ENCODE measurements at regions of chr5 and their contacts with region 1.

Region 1: GRCh38 chr5:150700594-150701293 is at the start of gene RBM22:
- DNase-seq: peak; percentile 84 to 96 (median 92)
- ATAC-seq: peak; percentile 93 to 94
- H3K4me3 Mint-ChIP-seq: no peak within 1 kb of the TSS
- H3K27ac Mint-ChIP-seq: no peak within 1 kb of the TSS
- H3K4me1 Mint-ChIP-seq: peaks cover 0 to 7% (median under 1%) of the 10 kb centered on the region in 4 donors
- H3K27me3 Mint-ChIP-seq: no peaks in the 10 kb centered on the region
- polyA plus RNA-seq, gene RBM22: 51.4 to 57.0 (median 56.2) TPM

Region 2: DNA sequence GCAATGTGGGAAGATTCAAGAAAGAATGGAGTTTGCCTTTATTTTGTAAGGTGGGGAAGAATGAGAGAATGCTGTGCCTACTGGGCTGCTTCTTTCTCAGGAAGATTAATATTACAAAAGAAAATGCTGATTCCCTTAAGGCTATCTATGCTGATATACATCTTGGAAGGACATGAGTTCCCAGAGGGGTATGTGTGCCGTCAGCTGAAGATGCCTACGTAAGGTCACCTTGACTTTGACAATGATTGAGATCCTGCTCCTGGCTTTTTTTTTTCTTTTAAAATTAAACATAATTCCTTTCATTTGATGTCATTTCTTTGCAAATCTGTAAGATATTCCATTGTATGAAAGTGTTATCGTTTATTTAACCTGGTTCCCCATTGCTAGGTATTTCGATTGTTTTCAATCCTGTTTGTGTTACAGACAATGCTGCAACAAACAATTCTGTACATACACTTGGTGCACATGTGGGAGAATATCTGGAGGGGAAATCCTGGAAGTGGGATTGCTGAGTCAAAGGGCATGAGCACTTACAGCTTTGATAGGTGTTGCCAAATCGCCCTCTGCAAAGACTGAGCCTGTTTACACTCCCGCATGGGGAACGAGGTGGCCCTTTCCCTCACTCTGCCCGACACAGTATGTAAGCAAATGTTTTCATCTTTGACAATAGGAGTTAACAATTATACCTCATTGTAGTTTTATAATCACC is 822.6 kb before region 1 on chr5:
- POLR2A ChIA-PET with region 1: no interaction called
- DNase-seq: no peak
- ATAC-seq: no peak
- H3K4me3 Mint-ChIP-seq: no peak overlapping the region
- H3K27ac Mint-ChIP-seq: no peak overlapping the region
- H3K4me1 Mint-ChIP-seq: no peaks in the 10 kb centered on the region
- H3K27me3 Mint-ChIP-seq: peaks cover 0 to 12% (median 8%) of the 10 kb centered on the region in 5 donors

Region 3: GRCh38 chr5:150449517-150450339 is 251.0 kb before region 1 on chr5 and contains the start of gene RPS14:
- POLR2A ChIA-PET with region 1: interaction called, 14 read pairs
- DNase-seq: peak; percentile 87 to 99 (median 94)
- ATAC-seq: peak; percentile 91
- H3K4me3 Mint-ChIP-seq: peak within 1 kb of the TSS; percentile 88 to 100 (median 97)
- H3K27ac Mint-ChIP-seq: peak within 1 kb of the TSS; percentile 98 to 100 (median 100)
- H3K4me1 Mint-ChIP-seq: peaks cover 16 to 46% (median 33%) of the 10 kb centered on the region in 4 donors
- H3K27me3 Mint-ChIP-seq: no peaks in the 10 kb centered on the region
- polyA plus RNA-seq, gene RPS14: 9,910 to 11,694 (median 11,598) TPM

Region 4: DNA sequence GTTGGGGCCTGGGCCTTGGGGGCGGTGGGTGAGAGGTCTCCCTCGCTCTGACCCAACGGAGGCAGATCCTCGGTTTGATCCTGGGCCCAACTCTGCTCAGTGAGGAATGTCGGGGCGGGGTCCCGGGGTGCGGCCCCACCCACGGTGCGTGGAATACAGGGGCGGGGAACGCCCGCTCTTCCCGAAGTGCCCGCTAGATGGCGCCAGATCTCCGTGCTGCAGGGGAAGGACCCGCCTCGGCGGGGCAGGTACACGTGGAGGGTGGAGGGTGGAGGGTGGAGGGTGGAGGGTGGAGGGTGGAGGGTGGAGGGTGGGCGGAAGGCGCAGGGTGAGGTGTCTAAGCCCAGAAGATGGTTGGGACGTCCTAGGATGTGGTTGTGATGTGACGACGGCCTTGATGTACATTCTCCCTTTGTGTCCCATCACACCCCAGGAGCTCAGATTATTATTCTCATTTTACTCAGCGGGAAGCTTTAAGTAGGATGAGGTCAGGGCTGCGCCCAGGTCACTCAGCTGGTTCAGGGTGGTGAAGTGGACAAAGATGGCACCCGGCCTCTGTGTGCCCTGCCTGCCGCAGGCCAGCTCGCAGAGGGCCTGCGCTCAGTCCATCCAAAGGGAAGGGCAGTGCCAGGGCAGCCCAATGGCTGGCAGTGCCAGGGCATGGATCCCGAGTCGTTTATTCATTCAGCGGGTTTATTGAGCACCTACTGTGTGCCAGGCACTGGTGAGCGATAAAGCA is 241.8 kb before region 1 on chr5:
- POLR2A ChIA-PET with region 1: interaction called, 18 read pairs
- DNase-seq: peak; percentile 74 to 91 (median 86)
- ATAC-seq: peak; percentile 93 to 96
- H3K4me3 Mint-ChIP-seq: peak overlapping the region in 9 of 10 donors; percentile 32 to 59 (median 47)
- H3K27ac Mint-ChIP-seq: peak overlapping the region in 9 of 10 donors; percentile 60 to 94 (median 84)
- H3K4me1 Mint-ChIP-seq: peaks cover 15 to 46% (median 41%) of the 10 kb centered on the region in 4 donors
- H3K27me3 Mint-ChIP-seq: no peaks in the 10 kb centered on the region

Region 5: GRCh38 chr5:150615141-150615699 is 85.5 kb before region 1 on chr5:
- POLR2A ChIA-PET with region 1: no interaction called
- DNase-seq: no peak
- ATAC-seq: no peak
- H3K4me3 Mint-ChIP-seq: no peak overlapping the region
- H3K27ac Mint-ChIP-seq: no peak overlapping the region
- H3K4me1 Mint-ChIP-seq: peaks cover 0 to 2% (median 0%) of the 10 kb centered on the region in 4 donors
- H3K27me3 Mint-ChIP-seq: peaks cover 0 to 13% (median 4%) of the 10 kb centered on the region in 5 donors

Region 6: DNA sequence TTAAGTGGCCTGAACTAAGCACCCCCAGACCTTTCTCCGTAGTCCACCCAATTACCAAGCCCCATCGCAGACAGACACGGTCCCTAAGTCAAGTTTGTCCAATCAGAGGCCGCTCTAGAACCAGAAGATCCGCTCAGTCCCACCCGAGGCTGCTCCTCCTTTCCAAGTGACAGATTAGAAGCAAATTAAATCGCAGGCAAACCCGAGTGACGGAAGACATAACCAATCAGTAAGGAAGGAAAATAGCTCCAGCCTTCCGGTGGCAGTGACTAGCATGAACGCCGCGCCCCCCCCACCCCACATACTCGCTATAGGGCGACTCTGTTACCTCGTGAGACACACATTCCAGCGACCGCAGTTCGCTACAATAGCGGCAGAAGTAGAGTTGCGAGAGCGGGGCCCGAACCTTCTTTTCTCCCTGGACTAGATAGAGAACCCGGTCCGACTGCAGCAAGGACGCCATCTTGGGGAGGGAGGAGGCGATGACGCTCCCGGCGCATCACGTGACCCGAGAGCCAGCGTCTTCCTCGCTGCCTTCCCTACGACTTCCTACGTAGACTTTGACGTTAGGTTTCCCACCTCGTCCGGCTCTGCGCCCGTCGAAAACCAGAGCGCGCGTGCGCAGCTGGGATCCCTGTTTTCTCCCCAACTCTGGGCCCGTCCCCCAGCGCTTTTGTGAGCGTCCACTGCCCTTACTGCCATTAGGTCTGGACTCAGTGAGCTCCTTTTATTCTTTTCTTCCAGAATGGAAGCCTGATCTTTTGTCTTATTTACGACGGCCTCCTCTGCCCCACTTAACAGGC is 58.0 kb after region 1 on chr5 and contains the start of gene DCTN4:
- POLR2A ChIA-PET with region 1: interaction called, 27 read pairs
- DNase-seq: peak; percentile 86 to 99 (median 94)
- ATAC-seq: peak; percentile 93 to 94
- H3K4me3 Mint-ChIP-seq: peak within 1 kb of the TSS in 1 of 10 donors; percentile 4
- H3K27ac Mint-ChIP-seq: no peak within 1 kb of the TSS
- H3K4me1 Mint-ChIP-seq: peaks cover 12 to 50% (median 31%) of the 10 kb centered on the region in 4 donors
- H3K27me3 Mint-ChIP-seq: peaks cover 0 to 14% (median 0%) of the 10 kb centered on the region in 5 donors
- polyA plus RNA-seq, gene DCTN4: 8.1 to 11.5 (median 9.5) TPM

Region 7: GRCh38 chr5:150778517-150779396 is 78.0 kb after region 1 on chr5 and contains the start of gene SMIM3:
- POLR2A ChIA-PET with region 1: interaction called, 18 read pairs
- DNase-seq: peak; percentile 38 to 80 (median 58)
- ATAC-seq: peak; percentile 60 to 78
- H3K4me3 Mint-ChIP-seq: peak within 1 kb of the TSS; percentile 91 to 100 (median 97)
- H3K27ac Mint-ChIP-seq: peak within 1 kb of the TSS; percentile 81 to 95 (median 90)
- H3K4me1 Mint-ChIP-seq: peaks cover 28 to 59% (median 57%) of the 10 kb centered on the region in 4 donors
- H3K27me3 Mint-ChIP-seq: peaks cover 0 to 2% (median 0%) of the 10 kb centered on the region in 5 donors
- polyA plus RNA-seq, gene SMIM3: 8.5 to 12.2 (median 8.6) TPM

Region 8: DNA sequence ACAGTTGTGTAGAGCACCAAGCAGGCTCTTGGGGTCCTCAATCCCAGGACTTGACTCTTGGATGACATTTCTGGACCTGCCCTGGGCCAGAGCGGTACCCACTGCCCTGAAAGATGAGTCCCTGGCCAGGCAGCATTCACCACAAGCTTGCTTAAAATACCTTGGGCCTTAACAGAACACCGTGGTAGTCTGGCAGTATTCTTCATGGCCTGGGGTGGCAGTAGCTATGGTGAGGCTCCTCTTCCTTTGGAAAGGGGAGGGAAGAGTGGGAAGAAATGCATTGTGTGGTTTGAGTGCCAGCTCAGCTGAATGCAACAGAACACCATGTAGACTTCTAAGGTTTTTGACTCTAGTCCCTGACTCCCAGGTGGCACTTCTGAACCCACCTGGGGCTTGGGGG is 116.2 kb after region 1 on chr5:
- POLR2A ChIA-PET with region 1: no interaction called
- DNase-seq: no peak
- ATAC-seq: no peak
- H3K4me3 Mint-ChIP-seq: no peak overlapping the region
- H3K27ac Mint-ChIP-seq: no peak overlapping the region
- H3K4me1 Mint-ChIP-seq: no peaks in the 10 kb centered on the region
- H3K27me3 Mint-ChIP-seq: peaks cover 0 to 10% (median 7%) of the 10 kb centered on the region in 5 donors

Region 9: GRCh38 chr5:150846654-150847333 is 146.1 kb after region 1 on chr5:
- POLR2A ChIA-PET with region 1: interaction called, 16 read pairs
- DNase-seq: peak; percentile 19 to 83 (median 62)
- ATAC-seq: peak; percentile 95
- H3K4me3 Mint-ChIP-seq: peak overlapping the region; percentile 73 to 90 (median 87)
- H3K27ac Mint-ChIP-seq: peak overlapping the region in 9 of 10 donors; percentile 73 to 92 (median 88)
- H3K4me1 Mint-ChIP-seq: peaks cover 13 to 22% (median 16%) of the 10 kb centered on the region in 4 donors
- H3K27me3 Mint-ChIP-seq: peaks cover 0 to 5% (median 0%) of the 10 kb centered on the region in 5 donors

Measured in naive thymus-derived CD8-positive, alpha-beta T cell (primary cell).